ENCODE measurements at regions of chr6 and their contacts with region 1.

Region 1: GRCh38 chr6:155174576-155175211 is 89.1 kb upstream of the CLDN20 start:
- DNase-seq: peak; percentile 67 to 81 (median 73)
- H3K4me3 ChIP-seq: no peak overlapping the region
- H3K4me3 Mint-ChIP-seq: peak overlapping the region in 3 of 8 donors; percentile 3 to 26 (median 4)
- H3K27ac ChIP-seq: no peak overlapping the region
- H3K27ac Mint-ChIP-seq: peak overlapping the region; percentile 5 to 83 (median 62)
- H3K4me1 ChIP-seq: peaks cover 21% of the 10 kb centered on the region
- H3K4me1 Mint-ChIP-seq: peaks cover 21 to 41% (median 26%) of the 10 kb centered on the region in 4 donors
- H3K27me3 ChIP-seq: no peaks in the 10 kb centered on the region
- H3K27me3 Mint-ChIP-seq: no peaks in the 10 kb centered on the region

Region 2: GRCh38 chr6:154733012-154733625 is 441.6 kb before region 1 on chr6 and contains the start of gene SCAF8:
- CTCF ChIA-PET with region 1: no interaction called
- POLR2A ChIA-PET with region 1: interaction called, 5 read pairs
- intact Hi-C with region 1: loop called (anchors 1 kb)
- DNase-seq: peak; percentile 77 to 93 (median 88)
- H3K4me3 ChIP-seq: peak within 1 kb of the TSS; percentile 63 to 68
- H3K4me3 Mint-ChIP-seq: peak within 1 kb of the TSS; percentile 87 to 95 (median 90)
- H3K27ac ChIP-seq: peak within 1 kb of the TSS; percentile 91
- H3K27ac Mint-ChIP-seq: peak within 1 kb of the TSS; percentile 82 to 98 (median 95)
- H3K4me1 ChIP-seq: peaks cover 45% of the 10 kb centered on the region
- H3K4me1 Mint-ChIP-seq: peaks cover 26 to 48% (median 36%) of the 10 kb centered on the region in 4 donors
- H3K27me3 ChIP-seq: no peaks in the 10 kb centered on the region
- H3K27me3 Mint-ChIP-seq: no peaks in the 10 kb centered on the region
- total RNA-seq, gene SCAF8: 59.9 to 60.5 TPM

Region 3: GRCh38 chr6:154928325-154928922 is 246.3 kb before region 1 on chr6:
- CTCF ChIA-PET with region 1: interaction called, 120 read pairs
- POLR2A ChIA-PET with region 1: no interaction called
- intact Hi-C with region 1: loop called (anchors 1 kb)
- DNase-seq: peak; percentile 48 to 56 (median 54)
- H3K4me3 ChIP-seq: no peak overlapping the region
- H3K4me3 Mint-ChIP-seq: no peak overlapping the region
- H3K27ac ChIP-seq: no peak overlapping the region
- H3K27ac Mint-ChIP-seq: peak overlapping the region in 1 of 7 donors; percentile 65
- H3K4me1 ChIP-seq: peaks cover 3% of the 10 kb centered on the region
- H3K4me1 Mint-ChIP-seq: peaks cover 0 to 6% (median 3%) of the 10 kb centered on the region in 4 donors
- H3K27me3 ChIP-seq: no peaks in the 10 kb centered on the region
- H3K27me3 Mint-ChIP-seq: no peaks in the 10 kb centered on the region

Region 4: DNA sequence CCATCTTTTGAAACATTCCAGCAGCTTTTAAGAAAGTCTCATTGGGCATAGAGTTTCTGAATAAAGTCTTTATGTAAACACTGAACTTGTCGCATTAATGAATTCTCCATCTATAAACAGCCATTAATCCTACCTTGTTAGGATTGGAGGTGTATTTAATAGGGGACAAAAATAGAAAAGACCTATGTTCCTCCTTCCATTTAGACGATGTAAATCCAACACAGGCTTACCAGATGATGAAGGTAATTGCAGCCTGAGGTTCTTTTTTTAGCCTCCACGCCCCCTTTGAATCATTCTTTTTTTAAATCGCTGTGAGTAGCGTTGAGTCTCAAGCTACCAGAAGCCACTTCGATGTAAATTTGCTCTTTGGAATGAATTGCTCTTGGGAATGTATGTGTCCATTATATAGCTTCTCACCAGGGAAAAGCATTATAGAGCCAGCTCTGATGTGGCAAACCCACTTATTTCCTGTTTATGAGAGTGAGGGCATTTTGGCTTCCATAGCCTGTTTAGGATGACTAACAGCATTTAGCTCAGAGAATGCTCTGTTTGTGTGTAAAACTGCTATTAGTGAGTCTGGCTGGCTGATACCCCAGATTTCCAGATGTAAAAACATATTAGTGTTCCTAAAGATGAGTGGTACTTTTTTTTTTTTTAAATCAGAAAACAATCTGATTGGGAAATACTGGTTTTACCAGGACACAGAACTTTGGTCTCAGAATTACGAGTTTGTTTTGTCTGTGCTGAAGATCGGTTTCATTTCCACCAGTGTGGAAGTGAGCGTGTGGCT is 14.2 kb after region 1 on chr6:
- CTCF ChIA-PET with region 1: interaction called, 11 read pairs
- POLR2A ChIA-PET with region 1: interaction called, 12 read pairs
- intact Hi-C with region 1: no loop called
- DNase-seq: peak in 4 of 5 donors; percentile 13 to 47 (median 24)
- H3K4me3 ChIP-seq: no peak overlapping the region
- H3K4me3 Mint-ChIP-seq: peak overlapping the region; percentile 33 to 75 (median 62)
- H3K27ac ChIP-seq: no peak overlapping the region
- H3K27ac Mint-ChIP-seq: peak overlapping the region in 5 of 7 donors; percentile 13 to 72 (median 35)
- H3K4me1 ChIP-seq: peaks cover 30% of the 10 kb centered on the region
- H3K4me1 Mint-ChIP-seq: peaks cover 18 to 42% (median 29%) of the 10 kb centered on the region in 4 donors
- H3K27me3 ChIP-seq: no peaks in the 10 kb centered on the region
- H3K27me3 Mint-ChIP-seq: peaks cover 0 to 1% of the 10 kb centered on the region in 2 donors

Region 5: GRCh38 chr6:155273431-155273830 is 98.7 kb after region 1 on chr6:
- CTCF ChIA-PET with region 1: interaction called, 21 read pairs
- POLR2A ChIA-PET with region 1: no interaction called
- intact Hi-C with region 1: loop called (anchors 1 kb)
- DNase-seq: no peak
- H3K4me3 ChIP-seq: no peak overlapping the region
- H3K4me3 Mint-ChIP-seq: no peak overlapping the region
- H3K27ac ChIP-seq: no peak overlapping the region
- H3K27ac Mint-ChIP-seq: peak overlapping the region in 2 of 7 donors; percentile 2 to 20
- H3K4me1 ChIP-seq: peaks cover under 1% of the 10 kb centered on the region
- H3K4me1 Mint-ChIP-seq: peaks cover 8 to 20% (median 12%) of the 10 kb centered on the region in 4 donors
- H3K27me3 ChIP-seq: no peaks in the 10 kb centered on the region
- H3K27me3 Mint-ChIP-seq: no peaks in the 10 kb centered on the region

Region 6: GRCh38 chr6:156474507-156475120 is 1299.9 kb after region 1 on chr6:
- CTCF ChIA-PET with region 1: no interaction called
- POLR2A ChIA-PET with region 1: no interaction called
- intact Hi-C with region 1: no loop called
- DNase-seq: no peak
- H3K4me3 ChIP-seq: no peak overlapping the region
- H3K4me3 Mint-ChIP-seq: peak overlapping the region in 4 of 8 donors; percentile 12 to 62 (median 24)
- H3K27ac ChIP-seq: no peak overlapping the region
- H3K27ac Mint-ChIP-seq: peak overlapping the region in 2 of 7 donors; percentile 36 to 69
- H3K4me1 ChIP-seq: no peaks in the 10 kb centered on the region
- H3K4me1 Mint-ChIP-seq: peaks cover 5 to 8% (median 6%) of the 10 kb centered on the region in 4 donors
- H3K27me3 ChIP-seq: no peaks in the 10 kb centered on the region
- H3K27me3 Mint-ChIP-seq: no peaks in the 10 kb centered on the region